Common myeloid progenitor, CD34-positive (primary cell): ENCODE measurements at regions of chr1 and their contacts with region 1.

Region 1: DNA sequence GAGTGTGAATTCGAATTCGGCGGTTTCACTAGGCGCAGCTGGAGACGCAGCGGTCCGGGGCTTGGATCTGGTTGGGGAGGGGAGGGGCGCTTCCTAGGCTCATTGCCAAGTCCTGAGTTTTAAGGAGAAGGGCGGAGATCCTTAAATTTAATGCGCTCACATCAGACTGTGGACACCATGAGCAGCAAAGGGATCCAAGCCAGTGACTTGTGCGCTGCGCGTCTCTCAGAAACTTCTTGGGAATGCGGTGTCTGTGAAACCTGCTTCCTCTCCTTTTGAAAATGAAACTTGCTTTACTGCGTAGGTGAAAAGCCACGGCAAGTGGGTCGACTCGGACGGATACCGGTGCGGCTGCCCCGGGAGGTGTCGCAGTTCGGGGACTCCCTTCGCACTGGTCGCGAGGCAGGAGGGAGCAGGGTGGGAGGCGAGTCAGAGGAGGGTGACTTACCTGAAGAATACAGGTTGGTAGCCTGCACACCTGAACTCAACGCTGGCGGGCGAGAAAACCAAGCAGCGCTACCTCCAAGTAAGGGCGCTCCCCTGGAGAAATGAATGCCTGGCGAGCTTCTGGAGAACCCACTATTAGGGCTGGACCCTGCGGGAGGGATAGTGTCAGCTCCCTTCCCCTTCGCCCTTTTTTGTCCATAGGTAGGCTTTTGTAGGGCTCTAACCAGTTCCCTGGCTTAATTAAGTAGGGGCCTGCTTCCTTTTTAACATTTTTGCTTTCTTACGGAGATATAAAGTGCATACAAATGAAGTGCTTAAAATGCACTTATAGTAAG is 992 bp downstream of the TENT5C start:
- DNase-seq: peak in 2 of 3 donors; percentile 62 to 65
- H3K4me3 ChIP-seq: peak overlapping the region; percentile 68 to 98 (median 88)
- H3K27ac ChIP-seq: peak overlapping the region; percentile 30 to 73
- H3K4me1 ChIP-seq: peaks cover 11 to 66% (median 34%) of the 10 kb centered on the region in 4 experiments
- H3K27me3 ChIP-seq: no peaks in the 10 kb centered on the region

Region 2: GRCh38 chr1:117225967-117226366 is 380.9 kb before region 1 on chr1:
- CTCF ChIA-PET with region 1: no interaction called
- POLR2A ChIA-PET with region 1: no interaction called
- DNase-seq: no peak
- H3K4me3 ChIP-seq: no peak overlapping the region
- H3K27ac ChIP-seq: no peak overlapping the region
- H3K4me1 ChIP-seq: no peaks in the 10 kb centered on the region
- H3K27me3 ChIP-seq: no peaks in the 10 kb centered on the region

Region 3: GRCh38 chr1:117412472-117412871 is 194.4 kb before region 1 on chr1:
- CTCF ChIA-PET with region 1: no interaction called
- POLR2A ChIA-PET with region 1: no interaction called
- DNase-seq: no peak
- H3K4me3 ChIP-seq: no peak overlapping the region
- H3K27ac ChIP-seq: no peak overlapping the region
- H3K4me1 ChIP-seq: no peaks in the 10 kb centered on the region
- H3K27me3 ChIP-seq: no peaks in the 10 kb centered on the region

Region 4: GRCh38 chr1:117622726-117623125 is 15.9 kb after region 1 on chr1:
- CTCF ChIA-PET with region 1: interaction called, 10 read pairs
- POLR2A ChIA-PET with region 1: interaction called, 7 read pairs
- DNase-seq: no peak
- H3K4me3 ChIP-seq: no peak overlapping the region
- H3K27ac ChIP-seq: no peak overlapping the region
- H3K4me1 ChIP-seq: peaks cover 0 to 19% (median 7%) of the 10 kb centered on the region in 4 experiments
- H3K27me3 ChIP-seq: no peaks in the 10 kb centered on the region